GM12878 (cell line): ENCODE measurements at regions of chr17 and their contacts with region 1.

Region 1: GRCh38 chr17:50094753-50095619 is at the start of gene PDK2:
- DNase-seq: peak; percentile 78
- ATAC-seq: peak; percentile 98
- H3K4me3 ChIP-seq: peak within 1 kb of the TSS; percentile 85
- H3K27ac ChIP-seq: peak within 1 kb of the TSS; percentile 44
- H3K4me1 ChIP-seq: peaks cover 17% of the 10 kb centered on the region
- H3K27me3 ChIP-seq: no peaks in the 10 kb centered on the region
- CTCF ChIP-seq: no peak
- EP300 ChIP-seq: peak in 1 of 2 experiments; percentile 38; a peak in 1 of 4 replicates
- POLR2A ChIP-seq: peak; percentile 71
- RAD21 ChIP-seq: no peak
- polyA plus RNA-seq, gene PDK2: 0.98 to 1.2 TPM

Region 2: DNA sequence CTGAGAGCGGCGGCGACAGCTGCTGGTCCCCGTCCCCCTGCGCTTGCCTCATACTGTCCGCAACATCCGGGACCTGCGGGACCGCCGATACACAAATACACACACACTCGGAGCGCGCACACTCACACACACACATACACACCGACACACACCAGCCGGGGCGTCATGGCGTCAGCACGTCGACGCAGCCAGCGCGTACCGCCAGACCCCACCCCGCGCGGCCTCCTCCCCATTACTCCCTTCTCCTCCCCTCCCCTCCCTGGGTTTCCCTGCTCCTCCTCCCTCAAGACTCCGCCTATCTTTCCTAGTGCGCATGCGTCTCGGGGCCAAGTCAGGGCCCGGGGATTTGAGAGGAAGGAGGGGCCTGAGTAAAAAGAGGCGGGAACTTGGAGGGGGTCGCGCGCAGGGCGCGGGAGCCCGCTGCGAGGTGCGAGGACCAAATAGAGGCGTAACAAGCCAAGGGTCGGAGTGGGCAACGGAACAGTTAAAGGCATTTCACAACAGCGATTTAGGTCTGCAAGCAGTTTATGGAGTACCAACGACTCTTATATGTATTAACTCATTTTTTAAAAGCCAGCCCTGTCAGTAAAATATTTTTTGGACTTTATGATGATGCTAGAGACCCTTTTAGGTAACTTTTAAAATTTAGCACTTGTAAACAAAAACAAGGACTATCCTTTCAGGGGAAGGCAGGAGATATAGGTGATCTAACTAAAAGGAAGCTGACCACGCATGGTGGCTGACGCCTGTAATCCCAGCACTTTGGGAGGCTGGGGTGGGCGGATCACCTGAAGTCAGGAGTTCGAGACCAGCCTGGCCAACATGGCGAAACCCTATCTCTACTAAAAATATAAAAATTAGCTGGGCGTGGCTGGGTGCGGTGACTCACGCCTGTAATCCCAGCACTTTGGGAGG is 416.8 kb before region 1 on chr17 and contains the start of gene SPOP:
- CTCF ChIA-PET with region 1: no interaction called
- POLR2A ChIA-PET with region 1: interaction called, 10 read pairs
- RAD21 ChIA-PET with region 1: no interaction called
- SMC1A ChIA-PET with region 1: no interaction called
- in situ Hi-C with region 1: no loop called
- intact Hi-C with region 1: no loop called
- DNase-seq: peak; percentile 96
- ATAC-seq: peak; percentile 86
- H3K4me3 ChIP-seq: peak within 1 kb of the TSS; percentile 80
- H3K27ac ChIP-seq: peak within 1 kb of the TSS; percentile 89
- H3K4me1 ChIP-seq: peaks cover 4% of the 10 kb centered on the region; the same call in 1 of the 2 replicates
- H3K27me3 ChIP-seq: no peaks in the 10 kb centered on the region; a peak in 1 of 4 replicates
- CTCF ChIP-seq: no peak
- EP300 ChIP-seq: 0 out of 4 replicates have a peak, but pooled peaks of 1 of the 2 experiments have one; percentile 51
- POLR2A ChIP-seq: peak; percentile 90
- RAD21 ChIP-seq: no peak
- polyA plus RNA-seq, gene SPOP: 35.1 to 39.0 TPM

Region 3: GRCh38 chr17:49760932-49761558 is 333.9 kb before region 1 on chr17:
- CTCF ChIA-PET with region 1: no interaction called
- POLR2A ChIA-PET with region 1: no interaction called
- RAD21 ChIA-PET with region 1: no interaction called
- SMC1A ChIA-PET with region 1: no interaction called
- in situ Hi-C with region 1: no loop called
- intact Hi-C with region 1: no loop called
- DNase-seq: no peak
- ATAC-seq: no peak
- H3K4me3 ChIP-seq: 0 out of 2 replicates have a peak overlapping the region, but pooled peaks have one; percentile 4
- H3K27ac ChIP-seq: no peak overlapping the region
- H3K4me1 ChIP-seq: peaks cover 18% of the 10 kb centered on the region
- H3K27me3 ChIP-seq: no peaks in the 10 kb centered on the region
- CTCF ChIP-seq: no peak
- EP300 ChIP-seq: no peak
- POLR2A ChIP-seq: no peak
- RAD21 ChIP-seq: no peak

Region 4: DNA sequence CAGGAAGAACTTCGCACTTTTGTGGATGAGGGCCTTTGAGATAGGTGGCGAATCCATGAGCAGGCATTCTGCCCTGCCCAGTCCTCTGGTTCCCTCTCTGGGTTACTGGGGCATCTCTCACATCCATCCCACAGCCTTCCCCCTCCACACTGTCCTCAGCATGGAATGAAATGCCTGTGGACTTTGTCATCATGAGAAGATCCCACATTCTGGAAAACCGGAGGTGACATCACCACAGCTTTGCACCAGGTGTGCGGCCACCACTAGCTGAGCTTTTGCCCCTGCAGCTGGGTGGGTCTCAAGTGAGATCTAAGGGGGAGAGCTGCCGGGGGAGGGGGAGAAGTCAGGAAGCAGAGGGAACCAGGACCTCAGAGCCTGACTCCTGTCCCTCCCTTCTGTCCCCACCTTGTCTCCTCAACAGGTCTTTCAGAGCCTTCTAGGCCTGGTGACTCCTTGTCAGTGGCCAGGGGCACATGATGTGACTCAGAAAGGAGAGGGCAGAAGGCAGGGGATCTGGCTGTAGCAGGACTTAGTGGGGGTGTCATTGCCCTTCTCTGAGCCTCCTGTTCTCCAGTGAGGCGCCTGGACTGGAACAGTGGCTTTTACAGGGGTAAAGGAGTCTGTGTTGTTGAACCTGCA is 166.0 kb before region 1 on chr17:
- CTCF ChIA-PET with region 1: no interaction called
- POLR2A ChIA-PET with region 1: no interaction called
- RAD21 ChIA-PET with region 1: no interaction called
- SMC1A ChIA-PET with region 1: no interaction called
- in situ Hi-C with region 1: no loop called
- intact Hi-C with region 1: no loop called
- DNase-seq: no peak
- ATAC-seq: no peak
- H3K4me3 ChIP-seq: no peak overlapping the region
- H3K27ac ChIP-seq: no peak overlapping the region
- H3K4me1 ChIP-seq: no peaks in the 10 kb centered on the region
- H3K27me3 ChIP-seq: peaks cover 2 to 6% of the 10 kb centered on the region in 2 experiments; a peak in 3 of 4 replicates
- CTCF ChIP-seq: no peak
- EP300 ChIP-seq: no peak
- POLR2A ChIP-seq: no peak
- RAD21 ChIP-seq: no peak

Region 5: GRCh38 chr17:49968380-49969133 is 126.4 kb before region 1 on chr17:
- CTCF ChIA-PET with region 1: no interaction called
- POLR2A ChIA-PET with region 1: no interaction called
- RAD21 ChIA-PET with region 1: no interaction called
- SMC1A ChIA-PET with region 1: no interaction called
- in situ Hi-C with region 1: no loop called
- intact Hi-C with region 1: no loop called
- DNase-seq: no peak
- ATAC-seq: peak; percentile 89
- H3K4me3 ChIP-seq: peak overlapping the region; percentile 77
- H3K27ac ChIP-seq: no peak overlapping the region
- H3K4me1 ChIP-seq: no peaks in the 10 kb centered on the region; the same call in 1 of the 2 replicates
- H3K27me3 ChIP-seq: peaks cover 30 to 40% of the 10 kb centered on the region in 2 experiments
- CTCF ChIP-seq: no peak
- EP300 ChIP-seq: no peak
- POLR2A ChIP-seq: peak; percentile 54; the same call in 1 of the 2 replicates
- RAD21 ChIP-seq: no peak

Region 6: GRCh38 chr17:50055426-50056230 is 39.4 kb before region 1 on chr17 and contains the start of gene ITGA3:
- CTCF ChIA-PET with region 1: interaction called, 38 read pairs
- POLR2A ChIA-PET with region 1: no interaction called
- RAD21 ChIA-PET with region 1: interaction called, 5 read pairs
- SMC1A ChIA-PET with region 1: interaction called, 7 read pairs
- in situ Hi-C with region 1: no loop called
- intact Hi-C with region 1: loop called (anchors 2 kb)
- DNase-seq: no peak
- ATAC-seq: peak; percentile 78
- H3K4me3 ChIP-seq: peak within 1 kb of the TSS; percentile 90
- H3K27ac ChIP-seq: no peak within 1 kb of the TSS
- H3K4me1 ChIP-seq: peaks cover 12% of the 10 kb centered on the region
- H3K27me3 ChIP-seq: no peaks in the 10 kb centered on the region
- CTCF ChIP-seq: no peak
- EP300 ChIP-seq: no peak
- POLR2A ChIP-seq: no peak
- RAD21 ChIP-seq: no peak
- polyA plus RNA-seq, gene ITGA3: 0.29 to 0.86 TPM

Region 7: GRCh38 chr17:50107790-50108414 is 12.9 kb after region 1 on chr17:
- CTCF ChIA-PET with region 1: interaction called, 11 read pairs
- POLR2A ChIA-PET with region 1: no interaction called
- RAD21 ChIA-PET with region 1: interaction called, 7 read pairs
- SMC1A ChIA-PET with region 1: interaction called, 5 read pairs
- in situ Hi-C with region 1: no loop called
- intact Hi-C with region 1: no loop called
- DNase-seq: no peak
- ATAC-seq: no peak
- H3K4me3 ChIP-seq: no peak overlapping the region
- H3K27ac ChIP-seq: no peak overlapping the region
- H3K4me1 ChIP-seq: no peaks in the 10 kb centered on the region
- H3K27me3 ChIP-seq: no peaks in the 10 kb centered on the region
- CTCF ChIP-seq: no peak
- EP300 ChIP-seq: no peak
- POLR2A ChIP-seq: no peak
- RAD21 ChIP-seq: no peak

Region 8: GRCh38 chr17:50129728-50130558 is 35.0 kb after region 1 on chr17 and contains the start of gene SAMD14:
- CTCF ChIA-PET with region 1: interaction called, 21 read pairs
- POLR2A ChIA-PET with region 1: interaction called, 4 read pairs
- RAD21 ChIA-PET with region 1: interaction called, 3 read pairs
- SMC1A ChIA-PET with region 1: no interaction called
- in situ Hi-C with region 1: no loop called
- intact Hi-C with region 1: no loop called
- DNase-seq: no peak
- ATAC-seq: peak; percentile 82
- H3K4me3 ChIP-seq: peak within 1 kb of the TSS; percentile 62; the same call in 1 of the 2 replicates
- H3K27ac ChIP-seq: no peak within 1 kb of the TSS
- H3K4me1 ChIP-seq: peaks cover 6% of the 10 kb centered on the region; the same call in 1 of the 2 replicates
- H3K27me3 ChIP-seq: peaks cover 4 to 10% of the 10 kb centered on the region in 2 experiments
- CTCF ChIP-seq: no peak
- EP300 ChIP-seq: no peak
- POLR2A ChIP-seq: no peak
- RAD21 ChIP-seq: no peak
- polyA plus RNA-seq, gene SAMD14: not detected

Region 9: DNA sequence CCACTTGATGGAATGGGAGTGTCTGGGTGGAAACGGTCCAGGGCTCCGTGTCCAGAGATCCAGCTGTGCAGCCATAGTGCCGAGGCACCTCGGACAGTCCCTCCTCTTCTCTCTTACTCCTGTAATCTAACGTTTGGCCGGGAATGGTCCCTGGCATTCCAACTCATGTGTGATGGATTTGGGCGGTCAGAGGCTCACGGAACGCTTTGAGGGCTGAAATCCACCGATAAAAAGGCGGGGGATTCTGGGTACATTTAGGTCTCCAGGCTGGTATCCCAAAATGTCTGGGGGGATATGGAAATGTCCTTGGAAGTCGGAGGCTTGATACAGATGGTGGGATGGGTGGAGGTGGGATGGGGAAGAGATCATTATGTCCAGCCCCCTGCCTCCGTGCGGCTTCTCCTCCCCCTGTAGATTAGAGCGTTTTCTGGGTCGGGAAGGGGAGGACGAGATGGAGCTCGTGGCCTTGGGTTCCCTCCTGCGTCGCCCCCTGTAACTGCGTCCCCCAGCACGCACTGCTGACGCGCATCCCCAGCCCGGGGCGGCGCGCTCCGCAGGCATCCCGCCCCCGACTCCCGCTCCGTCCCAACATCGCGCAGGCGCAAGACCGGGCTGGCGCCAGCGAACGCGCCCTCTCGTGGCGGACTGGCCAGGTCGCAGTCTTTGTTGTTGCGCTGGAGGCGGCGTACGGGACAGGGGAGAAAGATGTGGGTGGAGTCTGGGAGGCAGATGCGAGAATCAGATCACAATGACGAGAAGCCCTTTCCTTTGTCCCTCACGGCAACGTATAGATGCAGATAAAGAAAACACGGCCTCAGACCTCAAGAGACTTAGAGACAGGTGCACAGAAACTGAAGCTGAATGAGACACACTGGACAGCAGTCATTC is 66.3 kb after region 1 on chr17:
- CTCF ChIA-PET with region 1: interaction called, 40 read pairs
- POLR2A ChIA-PET with region 1: interaction called, 5 read pairs
- RAD21 ChIA-PET with region 1: interaction called, 11 read pairs
- SMC1A ChIA-PET with region 1: interaction called, 17 read pairs
- in situ Hi-C with region 1: no loop called
- intact Hi-C with region 1: loop called (anchors 1 kb)
- DNase-seq: peak; percentile 80
- ATAC-seq: peak; percentile 96
- H3K4me3 ChIP-seq: peak overlapping the region; percentile 53
- H3K27ac ChIP-seq: peak overlapping the region; percentile 32; the same call in 1 of the 2 replicates
- H3K4me1 ChIP-seq: peaks cover 26% of the 10 kb centered on the region
- H3K27me3 ChIP-seq: no peaks in the 10 kb centered on the region
- CTCF ChIP-seq: peak; percentile 93 to 98 (median 97)
- EP300 ChIP-seq: no peak
- POLR2A ChIP-seq: peak; percentile 83
- RAD21 ChIP-seq: peak; percentile 71

Region 10: DNA sequence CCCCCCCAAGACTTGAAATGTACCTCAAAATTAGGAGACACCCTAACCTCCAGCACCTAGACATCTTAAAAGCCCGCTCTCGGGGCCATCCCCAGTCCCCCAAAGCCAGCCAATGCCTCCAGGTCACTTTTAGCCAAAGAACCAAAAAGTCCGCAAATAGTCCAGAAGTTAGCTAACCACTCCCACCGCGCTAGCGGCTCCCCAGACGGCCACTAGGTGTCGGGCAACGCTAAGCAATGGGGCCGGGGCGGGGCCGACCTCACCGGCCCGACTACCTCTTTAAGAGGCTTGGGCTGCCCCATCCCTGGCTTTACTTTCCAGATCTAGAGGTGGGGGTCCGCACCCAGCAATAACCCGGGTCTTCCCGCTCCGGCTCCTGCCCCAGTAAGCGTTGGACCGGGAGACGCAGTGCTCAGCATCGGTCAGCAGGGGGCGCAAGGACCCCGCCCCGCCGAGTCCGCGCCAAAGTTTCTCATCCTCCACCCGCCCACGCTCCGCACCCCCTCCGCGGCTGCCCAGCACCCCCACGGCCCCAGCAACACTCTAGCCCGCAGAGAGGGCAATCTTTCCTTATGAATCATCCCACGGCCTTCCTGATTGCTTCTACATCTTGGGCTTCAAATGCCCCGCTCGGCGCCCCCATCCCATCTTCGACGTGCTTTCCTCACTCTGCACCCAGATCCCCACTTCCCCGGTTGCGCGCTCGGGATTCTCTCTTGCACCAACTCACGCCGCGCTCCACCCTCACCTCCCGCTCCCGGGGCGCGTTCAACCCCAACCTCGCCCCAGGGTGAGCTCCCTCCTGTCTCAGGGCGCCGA is 105.7 kb after region 1 on chr17:
- CTCF ChIA-PET with region 1: interaction called, 25 read pairs
- POLR2A ChIA-PET with region 1: interaction called, 3 read pairs
- RAD21 ChIA-PET with region 1: interaction called, 11 read pairs
- SMC1A ChIA-PET with region 1: interaction called, 7 read pairs
- in situ Hi-C with region 1: no loop called
- intact Hi-C with region 1: no loop called
- DNase-seq: no peak
- ATAC-seq: peak; percentile 88
- H3K4me3 ChIP-seq: peak overlapping the region; percentile 70
- H3K27ac ChIP-seq: no peak overlapping the region
- H3K4me1 ChIP-seq: peaks cover 9% of the 10 kb centered on the region
- H3K27me3 ChIP-seq: peaks cover 9 to 13% of the 10 kb centered on the region in 2 experiments
- CTCF ChIP-seq: peak; percentile 70 to 99 (median 92)
- EP300 ChIP-seq: no peak
- POLR2A ChIP-seq: no peak
- RAD21 ChIP-seq: peak; percentile 92